Activated naive CD8-positive, alpha-beta T cell treated with anti-CD3 and anti-CD28 coated beads, Interleukin-2, amount 10 ng/mL, durations not matched to agents 7 days and 5 days (primary cell): ENCODE measurements at regions of chr4 and their contacts with region 1.

Region 1: GRCh38 chr4:36310793-36311192 is 29.4 kb downstream of the DTHD1 start:
- DNase-seq: no peak
- ATAC-seq: peak; percentile 81
- H3K4me3 Mint-ChIP-seq: peak overlapping the region; percentile 76
- H3K27ac Mint-ChIP-seq: peak overlapping the region; percentile 76
- H3K4me1 Mint-ChIP-seq: peaks cover 25% of the 10 kb centered on the region
- H3K27me3 Mint-ChIP-seq: peaks cover 7% of the 10 kb centered on the region

Region 2: GRCh38 chr4:37620176-37620575 is 1309.4 kb after region 1 on chr4:
- POLR2A ChIA-PET with region 1: interaction called, 10 read pairs
- DNase-seq: no peak
- ATAC-seq: no peak
- H3K4me3 Mint-ChIP-seq: no peak overlapping the region
- H3K27ac Mint-ChIP-seq: no peak overlapping the region
- H3K4me1 Mint-ChIP-seq: peaks cover 1% of the 10 kb centered on the region
- H3K27me3 Mint-ChIP-seq: no peaks in the 10 kb centered on the region